PC-3 (cell line): ENCODE measurements at regions of chr6 and their contacts with region 1.

Region 1: GRCh38 chr6:166950443-166950821 is 5.9 kb downstream of the RNASET2 start:
- DNase-seq: no peak
- ATAC-seq: no peak
- H3K4me3 ChIP-seq: no peak overlapping the region
- H3K27ac ChIP-seq: no peak overlapping the region
- H3K4me1 ChIP-seq: peaks cover 10% of the 10 kb centered on the region
- H3K27me3 ChIP-seq: no peaks in the 10 kb centered on the region
- CTCF ChIP-seq: no peak

Region 2: GRCh38 chr6:166786704-166787293 is 163.6 kb before region 1 on chr6:
- CTCF ChIA-PET with region 1: no interaction called
- POLR2A ChIA-PET with region 1: no interaction called
- intact Hi-C with region 1: loop called (anchors 1 kb)
- DNase-seq: peak; percentile 73
- ATAC-seq: peak; percentile 38; the same call in 1 of the 2 replicates
- H3K4me3 ChIP-seq: no peak overlapping the region
- H3K27ac ChIP-seq: no peak overlapping the region
- H3K4me1 ChIP-seq: no peaks in the 10 kb centered on the region
- H3K27me3 ChIP-seq: no peaks in the 10 kb centered on the region
- CTCF ChIP-seq: peak; percentile 81

Region 3: DNA sequence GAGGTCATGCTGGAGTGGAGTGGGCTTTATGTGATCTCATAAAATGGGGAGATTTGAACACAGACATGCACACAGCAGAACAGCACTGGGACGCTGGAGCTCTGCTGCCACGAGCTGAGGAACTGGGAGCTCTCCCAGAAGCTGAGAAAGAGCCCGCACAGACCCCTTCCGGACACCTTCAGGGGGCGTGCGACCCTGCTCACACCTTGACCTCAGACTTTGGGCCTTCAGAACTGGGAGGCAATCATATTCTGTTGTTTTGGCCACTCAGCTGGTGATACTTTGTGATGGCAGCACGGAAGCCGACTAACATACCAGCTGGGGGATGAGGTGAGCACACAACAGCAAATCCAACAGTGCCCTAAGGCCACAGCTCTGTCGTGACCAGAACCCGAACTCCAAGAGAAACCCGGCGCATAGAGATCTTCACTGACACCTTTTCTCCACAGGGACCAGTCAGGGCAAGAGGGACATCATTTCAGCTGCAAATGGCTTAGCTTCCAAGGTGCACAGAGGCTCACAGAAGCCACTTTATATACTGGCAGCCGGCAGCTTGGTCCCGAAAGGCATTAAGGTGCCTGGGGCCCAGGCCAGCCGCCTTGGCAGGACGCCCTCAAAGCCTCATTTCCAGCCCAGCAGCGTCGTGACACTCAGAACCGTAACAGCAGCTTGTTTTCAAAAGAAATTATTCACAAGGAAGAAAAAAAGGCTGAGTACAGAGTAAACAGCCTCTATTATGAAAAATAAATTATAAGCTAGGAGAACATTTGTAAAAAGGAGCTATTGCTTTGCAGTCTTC is 83.4 kb before region 1 on chr6:
- CTCF ChIA-PET with region 1: no interaction called
- POLR2A ChIA-PET with region 1: no interaction called
- intact Hi-C with region 1: no loop called
- DNase-seq: no peak
- ATAC-seq: no peak
- H3K4me3 ChIP-seq: no peak overlapping the region
- H3K27ac ChIP-seq: no peak overlapping the region
- H3K4me1 ChIP-seq: no peaks in the 10 kb centered on the region
- H3K27me3 ChIP-seq: peaks cover 12% of the 10 kb centered on the region
- CTCF ChIP-seq: no peak

Region 4: GRCh38 chr6:166929542-166930189 is 20.8 kb before region 1 on chr6:
- CTCF ChIA-PET with region 1: interaction called, 5 read pairs
- POLR2A ChIA-PET with region 1: no interaction called
- intact Hi-C with region 1: loop called (anchors 1 kb)
- DNase-seq: peak; percentile 14
- ATAC-seq: peak; percentile 37
- H3K4me3 ChIP-seq: no peak overlapping the region
- H3K27ac ChIP-seq: no peak overlapping the region
- H3K4me1 ChIP-seq: peaks cover 23% of the 10 kb centered on the region
- H3K27me3 ChIP-seq: no peaks in the 10 kb centered on the region
- CTCF ChIP-seq: peak; percentile 40

Region 5: GRCh38 chr6:166989427-166990032 is 39.1 kb after region 1 on chr6:
- CTCF ChIA-PET with region 1: interaction called, 3 read pairs
- POLR2A ChIA-PET with region 1: no interaction called
- intact Hi-C with region 1: loop called (anchors 2 kb)
- DNase-seq: peak; percentile 46
- ATAC-seq: peak; percentile 24; the same call in 1 of the 2 replicates
- H3K4me3 ChIP-seq: no peak overlapping the region
- H3K27ac ChIP-seq: no peak overlapping the region
- H3K4me1 ChIP-seq: no peaks in the 10 kb centered on the region
- H3K27me3 ChIP-seq: no peaks in the 10 kb centered on the region
- CTCF ChIP-seq: peak; percentile 55; the same call in 1 of the 2 replicates